ENCODE measurements at regions of chr11 and their contacts with region 1.

Region 1: DNA sequence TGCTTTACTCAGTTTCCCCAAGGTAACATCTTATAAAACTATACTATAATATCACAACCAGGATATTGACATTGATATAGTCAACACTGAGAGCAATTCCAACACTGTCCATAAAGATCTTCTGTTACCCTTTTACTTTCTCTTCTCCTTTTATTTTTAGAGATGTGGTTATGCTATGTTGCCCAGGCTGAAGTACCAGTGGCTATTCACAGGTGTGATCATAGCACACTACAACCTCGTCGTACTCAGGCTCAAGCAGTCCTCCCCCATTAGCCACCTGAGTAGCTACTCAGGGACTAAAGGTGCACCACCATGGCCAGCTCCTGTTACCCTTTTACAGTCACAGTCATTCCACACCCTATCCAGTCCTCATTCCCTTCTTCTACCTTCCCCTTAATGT is 119.7 kb downstream of the CWF19L2 start:
- DNase-seq: no peak

Region 2: DNA sequence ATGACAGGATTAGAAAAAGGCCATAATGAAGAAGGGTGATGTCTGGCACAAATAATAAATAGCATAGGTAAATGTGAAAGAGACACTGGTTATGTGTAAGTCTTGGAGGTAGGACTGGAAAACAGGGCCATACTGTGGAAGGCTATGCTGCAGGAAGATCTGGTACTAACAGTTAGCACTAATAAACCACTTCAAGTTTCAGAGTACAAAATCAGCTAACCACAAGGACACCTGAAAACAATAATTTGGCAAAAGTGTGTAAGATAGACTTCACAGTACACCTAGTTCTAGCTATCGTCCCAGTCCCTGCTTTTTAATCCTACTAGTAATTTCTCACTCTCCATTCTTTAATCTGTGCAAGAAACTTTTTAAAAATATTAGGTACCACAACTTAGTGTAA is 75.4 kb after region 1 on chr11:
- intact Hi-C with region 1: loop called in 1 of 2 experiments (anchors 2 kb)
- DNase-seq: no peak

Measured in posterior vena cava (tissue), 2 donors.